Activated B cell treated with CpG ODN at 0.5 μM for 24 hours (primary cell): ENCODE measurements at regions of chr3 and their contacts with region 1.

Region 1: DNA sequence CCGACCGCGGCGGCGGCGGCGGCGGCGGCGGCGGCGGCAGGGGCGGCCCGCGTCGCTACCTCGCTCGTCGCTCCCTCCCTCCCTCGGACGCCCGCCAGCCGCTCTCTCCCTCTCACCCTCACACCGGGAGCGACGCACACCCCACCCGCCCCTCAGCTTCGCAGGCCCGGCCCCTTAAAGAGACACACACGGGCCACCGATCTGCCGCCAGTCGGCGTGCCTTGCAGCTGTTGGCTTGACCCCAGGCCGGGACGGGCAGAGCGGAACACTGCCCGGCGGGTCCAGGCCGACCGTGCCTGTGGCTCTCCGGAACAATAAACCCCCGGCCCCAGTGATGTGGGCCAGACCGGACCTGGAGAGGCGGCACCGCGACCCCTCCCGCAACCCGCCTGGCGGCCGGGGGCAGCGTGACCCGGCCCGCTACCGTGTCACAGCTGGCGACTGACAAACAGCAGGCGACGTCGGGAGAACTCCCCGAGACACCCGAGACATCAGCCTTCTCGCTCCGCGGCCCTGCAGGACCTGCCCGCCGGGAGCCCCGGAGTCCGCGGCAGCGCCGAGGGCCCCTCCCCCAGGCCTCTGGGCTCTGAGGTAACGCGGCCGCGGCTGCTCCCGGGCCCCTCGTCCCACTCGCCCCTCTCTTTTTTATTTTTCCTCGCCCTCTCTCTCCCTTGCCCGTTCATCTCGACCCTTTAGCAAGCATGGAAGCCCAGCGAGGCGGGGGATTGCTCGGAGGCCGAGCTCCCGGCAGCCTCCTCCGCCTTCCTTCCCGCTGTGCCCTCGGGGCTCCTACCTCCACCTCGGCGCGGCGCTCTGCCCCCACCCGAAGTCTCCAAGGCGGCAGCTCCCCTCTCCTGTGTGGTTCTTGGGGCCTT is at the start of gene SETD2:
- DNase-seq: peak; percentile 80
- ATAC-seq: peak; percentile 86
- H3K4me3 Mint-ChIP-seq: peak within 1 kb of the TSS; percentile 98
- H3K27ac Mint-ChIP-seq: peak within 1 kb of the TSS; percentile 96
- H3K4me1 Mint-ChIP-seq: peaks cover 53% of the 10 kb centered on the region
- H3K27me3 Mint-ChIP-seq: no peaks in the 10 kb centered on the region
- CTCF ChIP-seq: no peak
- total RNA-seq, gene SETD2: 56.9 and 65.7 TPM in 2 replicates

Region 2: DNA sequence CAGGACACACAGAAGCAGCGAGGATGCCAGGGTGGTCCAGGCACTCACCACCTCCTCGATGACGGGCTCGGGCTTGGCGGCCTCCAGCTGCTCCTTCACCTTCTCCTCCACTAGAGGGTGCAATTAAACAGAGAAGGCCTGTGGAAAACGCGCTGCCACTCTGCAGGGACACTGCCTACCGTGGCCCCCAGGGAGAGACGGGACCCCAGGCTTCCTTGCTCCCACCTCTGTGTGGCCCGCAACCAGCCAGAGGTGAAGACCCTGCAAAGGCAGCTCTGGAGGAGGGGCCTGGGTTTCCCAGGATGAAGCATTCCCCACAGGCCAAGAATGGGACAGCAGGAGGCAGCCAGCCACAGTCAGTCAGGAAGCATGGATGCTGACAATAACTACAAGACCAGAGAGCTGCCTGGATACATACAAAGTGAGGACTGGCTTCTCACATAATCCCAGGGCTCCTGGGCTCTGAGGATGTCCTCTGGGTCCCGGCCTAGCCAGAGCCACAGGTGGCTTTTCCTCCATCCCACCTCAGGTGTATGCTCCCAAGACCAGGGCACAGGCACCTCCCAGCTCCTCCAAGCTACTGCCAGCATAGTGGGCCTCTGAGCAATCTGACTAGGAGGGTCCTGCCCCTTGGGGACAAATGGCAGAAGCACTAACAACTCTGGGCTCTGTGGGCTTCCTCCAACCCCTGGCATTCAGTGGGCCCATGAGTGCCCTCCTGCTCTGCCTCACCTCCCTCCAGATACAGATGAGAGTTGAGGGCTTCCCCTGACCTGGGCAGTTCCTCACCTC is 240.5 kb before region 1 on chr3:
- CTCF ChIA-PET with region 1: no interaction called
- POLR2A ChIA-PET with region 1: no interaction called
- intact Hi-C with region 1: loop called (anchors 5 kb)
- DNase-seq: no peak
- ATAC-seq: no peak
- H3K4me3 Mint-ChIP-seq: peak overlapping the region; percentile 19
- H3K27ac Mint-ChIP-seq: peak overlapping the region; percentile 68
- H3K4me1 Mint-ChIP-seq: peaks cover 59% of the 10 kb centered on the region
- H3K27me3 Mint-ChIP-seq: no peaks in the 10 kb centered on the region
- CTCF ChIP-seq: no peak

Region 3: DNA sequence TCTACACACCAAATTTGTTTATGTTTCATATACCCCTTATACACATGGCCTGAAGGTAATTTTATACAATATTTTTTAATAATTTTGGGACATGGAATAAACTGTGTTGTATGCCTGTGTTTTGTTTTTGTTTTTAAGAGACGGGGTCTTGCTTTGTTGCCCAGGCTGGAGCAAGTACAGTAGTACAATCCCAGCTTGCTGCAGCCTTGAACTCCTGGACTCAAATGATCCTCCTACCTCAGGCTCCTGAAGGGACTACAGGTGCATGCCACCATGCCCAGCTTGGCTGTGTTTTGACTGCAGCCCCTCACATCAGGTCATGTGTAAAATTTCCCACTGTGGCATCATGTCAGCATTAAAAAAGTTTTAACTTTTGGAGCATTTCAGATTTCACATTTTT is 19.0 kb before region 1 on chr3:
- CTCF ChIA-PET with region 1: interaction called, 7 read pairs
- POLR2A ChIA-PET with region 1: interaction called, 6 read pairs
- intact Hi-C with region 1: loop called (anchors 2 kb)
- DNase-seq: no peak
- ATAC-seq: no peak
- H3K4me3 Mint-ChIP-seq: no peak overlapping the region
- H3K27ac Mint-ChIP-seq: no peak overlapping the region
- H3K4me1 Mint-ChIP-seq: peaks cover 72% of the 10 kb centered on the region
- H3K27me3 Mint-ChIP-seq: no peaks in the 10 kb centered on the region
- CTCF ChIP-seq: no peak

Region 4: GRCh38 chr3:47282424-47283192 is 118.4 kb after region 1 on chr3 and contains the starts of genes KIF9 and KLHL18:
- CTCF ChIA-PET with region 1: interaction called, 4 read pairs
- POLR2A ChIA-PET with region 1: interaction called, 12 read pairs
- intact Hi-C with region 1: loop called (anchors 1 kb)
- DNase-seq: peak; percentile 93
- ATAC-seq: peak; percentile 82
- H3K4me3 Mint-ChIP-seq: peak within 1 kb of the TSS; percentile 100
- H3K27ac Mint-ChIP-seq: peak within 1 kb of the TSS; percentile 99
- H3K4me1 Mint-ChIP-seq: peaks cover 53% of the 10 kb centered on the region
- H3K27me3 Mint-ChIP-seq: no peaks in the 10 kb centered on the region
- CTCF ChIP-seq: no peak
- total RNA-seq, gene KIF9: 2.3 and 2.5 TPM in 2 replicates
- total RNA-seq, gene KLHL18: 36.6 and 38.0 TPM in 2 replicates

Region 5: GRCh38 chr3:47370887-47371697 is 206.8 kb after region 1 on chr3:
- CTCF ChIA-PET with region 1: no interaction called
- POLR2A ChIA-PET with region 1: no interaction called
- intact Hi-C with region 1: loop called (anchors 5 kb)
- DNase-seq: no peak
- ATAC-seq: peak; percentile 52
- H3K4me3 Mint-ChIP-seq: no peak overlapping the region
- H3K27ac Mint-ChIP-seq: no peak overlapping the region
- H3K4me1 Mint-ChIP-seq: no peaks in the 10 kb centered on the region
- H3K27me3 Mint-ChIP-seq: no peaks in the 10 kb centered on the region
- CTCF ChIP-seq: no peak

Region 6: GRCh38 chr3:47781685-47782445 is 617.6 kb after region 1 on chr3 and contains the start of gene SMARCC1:
- CTCF ChIA-PET with region 1: no interaction called
- POLR2A ChIA-PET with region 1: no interaction called
- intact Hi-C with region 1: loop called (anchors 10 kb)
- DNase-seq: peak; percentile 98
- ATAC-seq: peak; percentile 84
- H3K4me3 Mint-ChIP-seq: peak within 1 kb of the TSS; percentile 93
- H3K27ac Mint-ChIP-seq: peak within 1 kb of the TSS; percentile 98
- H3K4me1 Mint-ChIP-seq: peaks cover 47% of the 10 kb centered on the region
- H3K27me3 Mint-ChIP-seq: no peaks in the 10 kb centered on the region
- CTCF ChIP-seq: no peak
- total RNA-seq, gene SMARCC1: 136 and 144 TPM in 2 replicates